HCT116 (cell line): ENCODE measurements at regions of chr12 and their contacts with region 1.

Region 1: GRCh38 chr12:6607751-6608591 is 792 bp upstream of the CHD4 start:
- DNase-seq: peak; percentile 92
- ATAC-seq: peak; percentile 75
- H3K4me3 ChIP-seq: peak overlapping the region; percentile 30 to 41
- H3K27ac ChIP-seq: peak overlapping the region; percentile 77
- H3K4me1 ChIP-seq: peaks cover 48 to 59% of the 10 kb centered on the region in 2 experiments
- H3K27me3 ChIP-seq: no peaks in the 10 kb centered on the region
- CTCF ChIP-seq: no peak
- POLR2A ChIP-seq: no peak
- RAD21 ChIP-seq: no peak

Region 2: GRCh38 chr12:6570264-6570887 is 37.6 kb before region 1 on chr12:
- CTCF ChIA-PET with region 1: no interaction called
- POLR2A ChIA-PET with region 1: interaction called, 4 read pairs
- RAD21 ChIA-PET with region 1: no interaction called
- intact Hi-C with region 1: loop called (anchors 5 kb)
- DNase-seq: peak; percentile 37
- ATAC-seq: peak; percentile 49
- H3K4me3 ChIP-seq: no peak overlapping the region
- H3K27ac ChIP-seq: 0 out of 2 replicates have a peak overlapping the region, but pooled peaks have one; percentile 81
- H3K4me1 ChIP-seq: peaks cover 6 to 15% of the 10 kb centered on the region in 2 experiments; a peak in 3 of 4 replicates
- H3K27me3 ChIP-seq: no peaks in the 10 kb centered on the region
- CTCF ChIP-seq: peak; percentile 36 to 86 (median 82); a peak in 5 of 6 replicates
- POLR2A ChIP-seq: no peak
- RAD21 ChIP-seq: peak; percentile 71

Region 3: DNA sequence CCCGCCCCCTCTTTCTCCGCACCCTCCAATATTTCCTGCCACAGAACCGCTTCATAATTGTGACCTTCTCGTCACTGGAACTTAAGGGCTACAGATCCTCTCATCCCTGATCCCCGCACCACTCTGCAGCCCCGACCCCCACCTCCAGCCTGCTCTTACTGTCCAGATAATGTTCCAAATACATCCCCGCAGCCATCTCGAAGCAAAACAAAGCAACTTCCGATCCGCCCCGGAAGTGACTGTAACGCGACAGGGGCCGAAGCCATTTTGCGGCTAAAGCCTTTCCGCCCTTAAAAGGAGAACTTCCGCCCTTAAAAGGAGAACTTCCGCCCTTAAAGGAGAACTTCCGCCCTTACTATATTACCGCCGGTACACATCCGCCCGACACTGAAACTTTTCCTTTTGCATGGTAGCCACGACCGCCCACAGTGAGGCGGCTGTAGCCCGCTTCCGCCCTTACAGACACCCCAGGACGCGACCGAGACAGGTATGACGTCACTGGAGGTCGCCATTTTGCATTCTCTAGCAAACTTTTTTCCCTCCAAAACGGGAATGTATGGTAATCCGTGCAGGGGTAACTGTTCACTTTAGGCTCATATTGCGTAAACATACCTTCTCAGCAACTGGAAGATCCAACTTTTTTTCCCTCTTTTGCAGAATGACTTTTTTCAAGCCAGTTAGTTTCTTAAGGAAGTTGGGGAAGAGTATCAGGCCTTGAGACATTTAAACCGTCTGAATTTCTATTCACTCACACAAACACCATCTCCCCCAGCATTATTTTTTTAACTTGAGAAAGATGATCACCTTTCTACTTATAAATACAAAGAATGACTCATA is 55.2 kb after region 1 on chr12 and contains the start of gene ING4:
- CTCF ChIA-PET with region 1: interaction called, 3 read pairs
- POLR2A ChIA-PET with region 1: no interaction called
- RAD21 ChIA-PET with region 1: no interaction called
- intact Hi-C with region 1: loop called (anchors 2 kb)
- DNase-seq: peak; percentile 99
- ATAC-seq: peak; percentile 98
- H3K4me3 ChIP-seq: peak within 1 kb of the TSS; percentile 68 to 91
- H3K27ac ChIP-seq: peak within 1 kb of the TSS; percentile 67
- H3K4me1 ChIP-seq: peaks cover 10 to 14% of the 10 kb centered on the region in 2 experiments; a peak in 3 of 4 replicates
- H3K27me3 ChIP-seq: no peaks in the 10 kb centered on the region
- CTCF ChIP-seq: no peak
- POLR2A ChIP-seq: no peak
- RAD21 ChIP-seq: no peak
- total RNA-seq, gene ING4: 17.9 TPM

Region 4: GRCh38 chr12:7769999-7770398 is 1162.0 kb after region 1 on chr12:
- CTCF ChIA-PET with region 1: no interaction called
- POLR2A ChIA-PET with region 1: no interaction called
- RAD21 ChIA-PET with region 1: no interaction called
- intact Hi-C with region 1: no loop called
- DNase-seq: no peak
- ATAC-seq: no peak
- H3K4me3 ChIP-seq: no peak overlapping the region
- H3K27ac ChIP-seq: no peak overlapping the region
- H3K4me1 ChIP-seq: no peaks in the 10 kb centered on the region
- H3K27me3 ChIP-seq: no peaks in the 10 kb centered on the region
- CTCF ChIP-seq: no peak
- POLR2A ChIP-seq: no peak
- RAD21 ChIP-seq: 0 out of 2 replicates have a peak, but pooled peaks have one; percentile 2